ENCODE measurements at regions of chr20 and their contacts with region 1.

Region 1: GRCh38 chr20:45971675-45972499 is at the start of gene ZNF335:
- DNase-seq: peak; percentile 97 to 98
- ATAC-seq: peak; percentile 97
- H3K4me3 ChIP-seq: peak within 1 kb of the TSS; percentile 42 to 67
- H3K27ac ChIP-seq: peak within 1 kb of the TSS; percentile 69 to 87
- H3K4me1 ChIP-seq: no peaks in the 10 kb centered on the region
- H3K27me3 ChIP-seq: no peaks in the 10 kb centered on the region
- total RNA-seq, gene ZNF335: 18.4 to 22.7 TPM

Region 2: DNA sequence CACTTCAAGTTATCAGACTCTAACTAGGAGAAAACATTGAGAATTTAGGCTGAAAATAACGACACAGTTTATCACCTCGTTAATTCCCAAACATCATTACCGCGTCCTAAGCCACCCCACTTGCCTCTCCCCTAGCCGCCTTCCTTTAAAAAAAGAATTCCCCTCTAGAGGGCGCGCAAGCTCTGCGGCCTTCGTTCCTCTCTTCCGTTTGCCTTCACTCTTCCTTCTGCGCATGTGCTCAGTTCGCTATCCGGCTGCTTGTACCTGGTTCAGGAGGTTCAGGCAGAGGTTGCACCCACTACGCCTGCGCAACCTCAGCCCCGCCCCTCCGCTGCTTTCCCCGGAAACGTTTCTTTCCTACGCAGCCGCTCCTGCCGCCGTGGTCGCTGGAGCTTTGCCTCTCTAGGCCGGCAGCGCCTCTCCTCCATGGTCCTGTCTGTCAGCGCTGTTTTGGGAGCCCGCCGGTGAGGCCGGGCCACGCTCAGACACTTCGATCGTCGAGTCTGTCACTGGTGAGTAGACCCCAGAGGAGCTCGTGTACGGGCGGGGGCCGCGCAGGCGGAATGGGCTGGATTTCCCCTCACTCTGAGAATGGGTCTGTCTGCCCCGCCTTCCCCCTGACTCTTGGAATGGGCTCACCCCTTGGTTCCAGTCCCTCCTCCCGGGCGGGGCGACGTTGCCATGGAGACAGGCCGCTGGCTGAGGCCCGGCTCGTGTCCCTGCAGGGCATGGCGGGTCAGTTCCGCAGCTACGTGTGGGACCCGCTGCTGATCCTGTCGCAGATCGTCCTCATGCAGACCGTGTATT is 608.9 kb before region 1 on chr20 and contains the start of gene SYS1:
- intact Hi-C with region 1: loop called in 1 of 2 experiments (anchors 5 kb)
- DNase-seq: peak; percentile 99 to 100
- ATAC-seq: peak; percentile 97
- H3K4me3 ChIP-seq: peak within 1 kb of the TSS; percentile 59 to 88
- H3K27ac ChIP-seq: peak within 1 kb of the TSS; percentile 73 to 87
- H3K4me1 ChIP-seq: peaks cover 0 to 2% of the 10 kb centered on the region in 2 donors
- H3K27me3 ChIP-seq: no peaks in the 10 kb centered on the region
- total RNA-seq, gene SYS1: 20.3 to 25.0 TPM

Region 3: GRCh38 chr20:45538209-45538799 is 433.6 kb before region 1 on chr20:
- intact Hi-C with region 1: no loop called
- DNase-seq: no peak
- ATAC-seq: no peak
- H3K4me3 ChIP-seq: no peak overlapping the region
- H3K27ac ChIP-seq: no peak overlapping the region
- H3K4me1 ChIP-seq: no peaks in the 10 kb centered on the region
- H3K27me3 ChIP-seq: no peaks in the 10 kb centered on the region

Region 4: DNA sequence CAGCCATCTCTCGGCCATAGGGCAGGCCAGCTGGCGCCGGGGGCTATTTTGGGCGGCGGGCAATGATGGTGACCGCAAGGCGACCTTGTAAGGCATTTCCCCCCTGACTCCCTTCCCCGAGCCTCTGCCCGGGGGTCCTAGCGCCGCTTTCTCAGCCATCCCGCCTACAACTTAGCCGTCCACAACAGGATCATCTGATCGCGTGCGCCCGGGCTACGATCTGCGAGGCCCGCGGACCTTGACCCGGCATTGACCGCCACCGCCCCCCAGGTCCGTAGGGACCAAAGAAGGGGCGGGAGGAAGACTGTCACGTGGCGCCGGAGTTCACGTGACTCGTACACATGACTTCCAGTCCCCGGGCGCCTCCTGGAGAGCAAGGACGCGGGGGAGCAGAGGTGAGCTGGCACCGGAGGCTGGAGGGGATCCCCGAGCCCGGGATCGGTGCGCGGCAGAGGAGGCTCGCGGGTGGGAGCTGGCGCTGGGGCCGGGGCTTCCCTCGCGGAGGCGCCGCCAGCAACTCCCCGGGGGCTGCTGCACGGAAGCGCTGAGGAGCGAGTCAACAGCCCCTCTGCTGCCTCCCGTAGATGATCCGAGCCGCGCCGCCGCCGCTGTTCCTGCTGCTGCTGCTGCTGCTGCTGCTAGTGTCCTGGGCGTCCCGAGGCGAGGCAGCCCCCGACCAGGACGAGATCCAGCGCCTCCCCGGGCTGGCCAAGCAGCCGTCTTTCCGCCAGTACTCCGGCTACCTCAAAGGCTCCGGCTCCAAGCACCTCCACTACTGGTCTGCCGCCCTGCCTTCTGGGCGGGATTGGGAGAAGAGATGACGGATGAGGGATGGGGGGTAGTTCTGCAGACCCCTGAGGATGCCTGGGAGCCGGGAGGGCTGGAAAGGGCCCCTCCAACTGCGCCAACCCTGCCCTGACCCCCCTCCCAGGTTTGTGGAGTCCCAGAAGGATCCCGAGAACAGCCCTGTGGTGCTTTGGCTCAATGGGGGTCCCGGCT is 80.6 kb before region 1 on chr20 and contains the starts of genes CTSA and NEURL2:
- intact Hi-C with region 1: loop called in 1 of 2 experiments (anchors 5 kb)
- DNase-seq: peak; percentile 94 to 97
- ATAC-seq: peak; percentile 93
- H3K4me3 ChIP-seq: peak within 1 kb of the TSS; percentile 42 to 55
- H3K27ac ChIP-seq: peak within 1 kb of the TSS in 1 of 2 donors; percentile 50
- H3K4me1 ChIP-seq: no peaks in the 10 kb centered on the region
- H3K27me3 ChIP-seq: no peaks in the 10 kb centered on the region
- total RNA-seq, gene CTSA: 83.4 to 140 TPM
- total RNA-seq, gene NEURL2: 9.9 to 32.9 TPM

Region 5: DNA sequence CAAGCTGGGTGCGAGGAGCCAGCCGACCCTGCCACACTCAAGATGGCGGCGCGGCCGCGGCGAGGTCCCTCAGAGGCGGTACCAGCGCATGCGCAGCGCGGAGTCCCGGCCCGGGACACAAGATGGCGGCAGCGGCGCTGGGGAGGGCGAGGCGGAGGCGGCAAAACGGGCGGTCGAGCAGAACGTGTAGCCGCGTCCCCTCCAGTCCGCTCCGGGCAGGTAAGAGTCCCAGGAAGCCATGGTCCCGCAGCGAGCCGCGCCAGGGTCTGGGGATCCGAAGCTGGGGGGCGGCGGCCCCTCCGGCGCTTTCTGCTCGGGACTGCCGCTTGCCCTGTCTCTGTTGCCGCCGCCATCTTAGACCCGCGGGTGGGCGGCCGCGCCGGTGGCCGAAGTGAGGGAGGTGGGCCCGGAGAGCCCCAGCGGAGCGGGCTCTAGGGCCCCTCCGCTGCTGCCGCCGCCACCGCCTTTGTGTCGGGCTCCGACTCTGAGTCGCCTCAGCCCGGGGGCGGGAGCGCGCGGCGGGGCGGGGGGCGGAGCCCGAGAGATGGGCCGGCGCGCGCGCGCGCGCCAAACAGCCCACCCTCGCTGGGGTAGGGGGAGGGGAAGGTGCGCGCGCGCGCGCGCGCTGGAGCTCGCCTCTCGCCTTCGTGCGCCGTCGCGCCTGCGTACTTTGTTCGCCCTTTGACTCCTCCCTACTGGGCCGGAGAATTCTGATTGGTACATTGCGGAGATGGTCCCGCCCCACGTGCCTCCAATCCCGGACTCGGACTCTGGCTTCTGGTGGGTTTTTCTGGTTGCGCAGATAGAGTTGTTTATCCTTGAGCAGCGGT is 37.1 kb before region 1 on chr20 and contains the start of gene PCIF1:
- intact Hi-C with region 1: loop called (anchors 1 to 2 kb)
- DNase-seq: peak; percentile 99
- ATAC-seq: peak; percentile 96
- H3K4me3 ChIP-seq: peak within 1 kb of the TSS; percentile 59 to 77
- H3K27ac ChIP-seq: peak within 1 kb of the TSS; percentile 80 to 81
- H3K4me1 ChIP-seq: no peaks in the 10 kb centered on the region
- H3K27me3 ChIP-seq: no peaks in the 10 kb centered on the region
- total RNA-seq, gene PCIF1: 32.5 to 33.3 TPM

Region 6: GRCh38 chr20:46089417-46090388 is 117.8 kb after region 1 on chr20 and contains the start of gene NCOA5:
- intact Hi-C with region 1: loop called in 1 of 2 experiments (anchors 5 kb)
- DNase-seq: peak; percentile 98 to 99
- ATAC-seq: peak; percentile 97
- H3K4me3 ChIP-seq: peak within 1 kb of the TSS; percentile 73 to 78
- H3K27ac ChIP-seq: peak within 1 kb of the TSS; percentile 91 to 95
- H3K4me1 ChIP-seq: peaks cover 4 to 5% of the 10 kb centered on the region in 2 donors
- H3K27me3 ChIP-seq: no peaks in the 10 kb centered on the region
- total RNA-seq, gene NCOA5: 18.6 to 23.7 TPM

Measured in aorta (tissue), 5 donors.